GM23248 (cell line): ENCODE measurements at regions of chr18 and their contacts with region 1.

Region 1: DNA sequence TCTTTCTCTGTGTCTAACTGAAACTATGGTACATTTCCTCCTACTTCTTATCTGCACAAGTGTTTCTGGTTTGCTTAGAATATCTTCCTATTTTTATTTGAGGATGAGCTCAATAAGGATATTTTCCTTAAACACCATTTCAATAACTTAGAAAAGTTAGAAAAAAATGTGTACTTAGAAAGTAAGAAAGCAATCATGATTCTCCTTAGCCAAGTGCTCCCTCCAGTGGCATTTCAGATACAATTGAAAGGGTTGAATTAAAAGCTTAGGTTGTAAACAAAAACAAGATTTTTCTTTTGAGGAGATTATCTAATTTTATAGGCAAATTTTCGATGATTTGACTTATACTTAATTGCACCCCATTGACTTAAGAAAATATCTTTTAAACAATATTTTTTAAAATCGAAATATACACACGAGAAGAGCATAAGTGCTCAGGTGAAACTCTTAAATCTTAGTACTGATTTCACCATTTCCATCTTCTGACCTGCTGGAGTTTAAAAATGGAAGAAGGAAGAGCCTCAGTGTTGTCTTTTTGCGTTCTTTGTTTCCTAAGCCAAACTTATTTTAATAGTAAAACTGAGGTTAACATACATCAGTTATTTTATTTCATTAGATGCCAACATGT is 26.9 kb downstream of the C18orf63 start:
- DNase-seq: peak; percentile 73
- H3K4me3 ChIP-seq: no peak overlapping the region
- H3K27ac ChIP-seq: no peak overlapping the region
- H3K4me1 ChIP-seq: no peaks in the 10 kb centered on the region
- H3K27me3 ChIP-seq: no peaks in the 10 kb centered on the region

Region 2: GRCh38 chr18:72762515-72763122 is 1579.9 kb before region 1 on chr18:
- in situ Hi-C with region 1: loop called (anchors 25 kb)
- DNase-seq: peak; percentile 65
- H3K4me3 ChIP-seq: no peak overlapping the region
- H3K27ac ChIP-seq: no peak overlapping the region
- H3K4me1 ChIP-seq: no peaks in the 10 kb centered on the region
- H3K27me3 ChIP-seq: no peaks in the 10 kb centered on the region

Region 3: DNA sequence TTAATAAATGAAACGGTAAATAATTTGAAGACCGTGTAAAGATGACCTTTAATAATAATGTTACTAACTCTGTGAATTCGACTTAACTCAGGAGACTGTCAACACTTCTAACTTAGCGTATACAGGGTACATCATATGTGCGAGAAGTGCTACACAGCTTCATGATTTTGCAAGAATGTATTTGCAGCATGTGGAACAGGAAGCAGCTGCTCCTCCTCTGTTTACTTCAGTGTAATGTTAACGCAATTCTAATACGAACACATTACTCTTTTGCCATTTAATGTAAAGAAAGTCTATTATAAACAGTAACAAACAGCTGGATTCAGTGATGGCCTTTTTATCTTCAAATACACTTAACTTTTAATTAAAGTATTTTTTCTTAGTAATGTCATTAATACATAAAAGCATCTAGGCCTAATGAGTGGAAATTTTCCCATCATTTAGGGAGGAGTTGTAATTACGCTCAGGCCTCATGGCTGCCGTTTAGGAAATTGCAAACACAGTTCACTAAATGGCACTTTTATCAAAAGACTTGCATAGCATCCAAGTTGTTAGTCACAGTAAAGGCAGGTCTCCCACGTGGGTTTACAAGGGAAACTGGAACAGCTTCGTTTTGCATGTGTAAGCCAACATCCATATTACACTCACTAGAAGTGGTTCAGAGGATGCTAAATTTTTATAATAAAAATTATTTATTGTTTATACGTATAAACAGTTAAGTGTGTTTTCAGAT is 830.6 kb before region 1 on chr18:
- in situ Hi-C with region 1: no loop called
- DNase-seq: peak; percentile 43
- H3K4me3 ChIP-seq: no peak overlapping the region
- H3K27ac ChIP-seq: no peak overlapping the region
- H3K4me1 ChIP-seq: peaks cover 23% of the 10 kb centered on the region
- H3K27me3 ChIP-seq: no peaks in the 10 kb centered on the region

Region 4: DNA sequence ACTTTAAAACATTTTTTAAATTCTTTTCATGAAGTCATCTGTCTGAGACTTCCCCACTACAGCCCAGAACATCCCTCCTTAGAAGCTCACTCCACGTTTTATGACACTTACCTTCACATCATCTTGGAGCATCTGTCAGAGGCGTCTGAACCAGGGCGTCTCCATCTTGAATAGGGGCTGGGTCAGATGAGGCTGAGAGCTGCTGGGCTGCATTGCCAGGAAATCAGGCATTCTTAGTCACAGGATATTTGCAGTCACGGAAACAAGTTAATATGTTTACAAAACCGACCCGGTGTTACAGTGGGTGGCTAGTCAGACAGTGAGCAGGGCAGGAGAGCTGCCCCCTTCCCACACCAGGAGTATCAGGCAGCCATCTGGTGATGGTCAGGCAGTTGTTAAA is 651.4 kb before region 1 on chr18:
- in situ Hi-C with region 1: no loop called
- DNase-seq: peak; percentile 81
- H3K4me3 ChIP-seq: no peak overlapping the region
- H3K27ac ChIP-seq: peak overlapping the region; percentile 71
- H3K4me1 ChIP-seq: peaks cover 25% of the 10 kb centered on the region
- H3K27me3 ChIP-seq: no peaks in the 10 kb centered on the region

Region 5: GRCh38 chr18:73852789-73853549 is 489.6 kb before region 1 on chr18:
- in situ Hi-C with region 1: loop called (anchors 25 kb)
- DNase-seq: no peak
- H3K4me3 ChIP-seq: no peak overlapping the region
- H3K27ac ChIP-seq: no peak overlapping the region
- H3K4me1 ChIP-seq: peaks cover 11% of the 10 kb centered on the region
- H3K27me3 ChIP-seq: peaks cover 12% of the 10 kb centered on the region